Transverse colon (tissue), 4 donors: ENCODE measurements at regions of chr12 and their contacts with region 1.

Region 1: GRCh38 chr12:12983420-12984035 is 16.5 kb downstream of the HEBP1 start:
- DNase-seq: no peak
- H3K4me3 ChIP-seq: no peak overlapping the region
- H3K27ac ChIP-seq: peak overlapping the region in 1 of 4 donors; percentile 7
- H3K4me1 ChIP-seq: peaks cover 0 to 15% (median 3%) of the 10 kb centered on the region in 4 donors
- H3K27me3 ChIP-seq: no peaks in the 10 kb centered on the region
- CTCF ChIP-seq: peak; percentile 46 to 58 (median 51)
- EP300 ChIP-seq: no peak
- POLR2A ChIP-seq: no peak

Region 2: DNA sequence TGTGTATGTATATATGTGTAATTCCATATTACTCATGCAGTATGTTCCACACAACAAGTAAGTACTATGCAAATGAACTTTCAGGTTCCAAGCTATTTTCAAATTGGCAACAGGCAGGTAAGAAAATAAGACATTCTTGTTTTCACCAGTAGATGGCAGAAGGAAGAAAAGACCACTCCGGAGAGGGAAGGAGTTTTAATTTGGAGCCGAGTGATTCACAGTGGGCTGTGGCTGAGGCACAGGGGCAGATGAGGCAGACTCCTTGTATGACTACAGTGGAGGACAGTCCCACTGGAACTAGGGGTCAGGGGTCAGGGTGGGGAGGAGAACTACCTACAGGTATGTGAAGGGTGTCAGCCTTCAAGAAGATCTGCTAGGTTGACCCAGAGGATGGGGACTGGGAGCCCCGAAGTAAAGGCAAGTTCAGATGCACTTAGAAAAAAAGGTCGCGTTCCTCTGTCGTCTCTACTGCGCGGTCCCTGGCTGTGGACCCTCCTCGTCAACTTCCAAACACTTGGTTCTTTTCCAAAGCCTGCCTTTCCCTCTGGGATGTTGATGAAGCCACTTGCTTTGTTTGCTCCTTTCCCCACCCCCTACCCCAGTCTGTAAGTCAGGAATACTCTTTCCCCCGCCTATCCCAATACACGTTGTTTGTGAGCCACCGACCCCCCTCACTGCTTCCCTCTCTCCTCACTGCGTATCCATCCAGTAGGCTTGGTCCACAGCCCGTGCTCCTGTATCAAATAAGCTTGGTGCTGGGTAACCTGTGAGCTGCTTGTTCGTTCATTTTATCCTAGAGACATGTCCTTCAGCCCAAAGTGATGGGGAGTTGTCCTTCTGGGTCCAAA is 146.3 kb before region 1 on chr12:
- in situ Hi-C with region 1: loop called in 2 of 4 experiments (anchors 10 to 25 kb)
- intact Hi-C with region 1: no loop called
- DNase-seq: peak; percentile 72
- H3K4me3 ChIP-seq: no peak overlapping the region
- H3K27ac ChIP-seq: peak overlapping the region in 1 of 4 donors; percentile 39
- H3K4me1 ChIP-seq: peaks cover 4 to 39% (median 16%) of the 10 kb centered on the region in 4 donors
- H3K27me3 ChIP-seq: no peaks in the 10 kb centered on the region
- CTCF ChIP-seq: peak; percentile 52 to 78 (median 59)
- EP300 ChIP-seq: no peak
- POLR2A ChIP-seq: peak; percentile 11

Region 3: DNA sequence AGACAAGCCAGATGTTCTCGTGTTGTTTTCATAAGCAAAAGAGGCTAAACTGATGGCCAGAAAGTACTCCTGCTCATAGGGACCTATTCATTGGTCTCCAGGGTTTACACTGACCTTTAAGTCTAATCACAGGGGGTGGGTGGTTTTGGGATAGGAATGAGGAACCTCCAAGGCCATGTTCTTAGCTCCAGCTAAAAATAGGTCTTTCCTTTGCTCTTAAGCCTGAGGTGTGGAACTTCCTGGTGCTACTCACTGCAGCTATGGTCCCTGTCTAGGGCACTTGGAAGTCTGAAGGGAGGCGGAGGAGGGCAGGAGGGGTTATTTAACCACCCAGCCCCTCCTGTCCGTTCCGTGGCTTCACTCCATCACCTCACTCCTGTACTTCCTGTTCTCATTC is 73.5 kb before region 1 on chr12:
- in situ Hi-C with region 1: loop called in 3 of 4 experiments (anchors 5 to 10 kb)
- intact Hi-C with region 1: loop called (anchors 5 kb)
- DNase-seq: no peak
- H3K4me3 ChIP-seq: no peak overlapping the region
- H3K27ac ChIP-seq: peak overlapping the region; percentile 5 to 50 (median 44)
- H3K4me1 ChIP-seq: peaks cover 0 to 27% (median 11%) of the 10 kb centered on the region in 4 donors
- H3K27me3 ChIP-seq: no peaks in the 10 kb centered on the region
- CTCF ChIP-seq: no peak
- EP300 ChIP-seq: no peak
- POLR2A ChIP-seq: no peak

Region 4: DNA sequence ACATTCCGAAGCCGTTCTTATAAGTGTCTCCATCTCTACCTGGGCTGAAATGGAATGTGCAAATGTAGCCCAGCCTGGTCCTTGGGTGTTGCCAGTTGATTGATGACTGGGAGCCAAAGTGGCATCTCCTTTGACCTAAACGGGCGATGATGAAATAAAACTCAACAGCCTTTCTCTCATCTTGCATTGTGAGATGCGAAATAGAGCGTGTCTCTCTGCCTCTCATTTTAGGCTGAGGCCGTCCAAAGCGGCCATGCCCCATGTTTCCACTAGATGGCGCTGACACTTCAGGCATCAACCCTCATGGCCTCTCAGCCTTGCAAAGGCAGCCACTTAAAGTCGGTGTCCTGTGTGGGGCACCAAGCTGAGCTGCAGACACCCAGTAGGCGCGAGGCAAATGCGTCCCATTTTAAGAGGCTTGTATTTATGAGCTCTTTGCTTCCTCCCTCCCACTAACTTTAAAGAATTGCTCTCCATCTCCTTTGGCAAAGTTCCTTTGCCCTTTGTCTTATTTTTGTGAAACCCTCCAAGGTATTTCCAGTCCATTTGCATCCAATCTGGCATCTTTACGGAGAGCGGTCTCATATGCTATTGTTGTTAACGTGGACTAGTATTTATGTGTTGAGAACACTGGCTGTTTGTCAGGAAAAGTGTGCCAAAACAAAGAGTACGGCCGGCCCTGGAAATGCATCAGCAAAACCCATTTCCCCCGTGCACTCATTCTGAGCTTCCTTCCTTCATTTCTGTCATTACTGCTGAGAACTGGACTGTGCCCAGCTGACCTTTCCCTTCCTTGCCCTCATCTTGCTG is 67.2 kb before region 1 on chr12:
- in situ Hi-C with region 1: loop called in 3 of 4 experiments (anchors 5 to 10 kb)
- intact Hi-C with region 1: loop called (anchors 5 kb)
- DNase-seq: peak; percentile 87
- H3K4me3 ChIP-seq: no peak overlapping the region
- H3K27ac ChIP-seq: peak overlapping the region in 3 of 4 donors; percentile 5 to 15 (median 12)
- H3K4me1 ChIP-seq: peaks cover 0 to 6% (median 3%) of the 10 kb centered on the region in 4 donors
- H3K27me3 ChIP-seq: no peaks in the 10 kb centered on the region
- CTCF ChIP-seq: peak; percentile 95 to 98 (median 97)
- EP300 ChIP-seq: no peak
- POLR2A ChIP-seq: no peak

Region 5: DNA sequence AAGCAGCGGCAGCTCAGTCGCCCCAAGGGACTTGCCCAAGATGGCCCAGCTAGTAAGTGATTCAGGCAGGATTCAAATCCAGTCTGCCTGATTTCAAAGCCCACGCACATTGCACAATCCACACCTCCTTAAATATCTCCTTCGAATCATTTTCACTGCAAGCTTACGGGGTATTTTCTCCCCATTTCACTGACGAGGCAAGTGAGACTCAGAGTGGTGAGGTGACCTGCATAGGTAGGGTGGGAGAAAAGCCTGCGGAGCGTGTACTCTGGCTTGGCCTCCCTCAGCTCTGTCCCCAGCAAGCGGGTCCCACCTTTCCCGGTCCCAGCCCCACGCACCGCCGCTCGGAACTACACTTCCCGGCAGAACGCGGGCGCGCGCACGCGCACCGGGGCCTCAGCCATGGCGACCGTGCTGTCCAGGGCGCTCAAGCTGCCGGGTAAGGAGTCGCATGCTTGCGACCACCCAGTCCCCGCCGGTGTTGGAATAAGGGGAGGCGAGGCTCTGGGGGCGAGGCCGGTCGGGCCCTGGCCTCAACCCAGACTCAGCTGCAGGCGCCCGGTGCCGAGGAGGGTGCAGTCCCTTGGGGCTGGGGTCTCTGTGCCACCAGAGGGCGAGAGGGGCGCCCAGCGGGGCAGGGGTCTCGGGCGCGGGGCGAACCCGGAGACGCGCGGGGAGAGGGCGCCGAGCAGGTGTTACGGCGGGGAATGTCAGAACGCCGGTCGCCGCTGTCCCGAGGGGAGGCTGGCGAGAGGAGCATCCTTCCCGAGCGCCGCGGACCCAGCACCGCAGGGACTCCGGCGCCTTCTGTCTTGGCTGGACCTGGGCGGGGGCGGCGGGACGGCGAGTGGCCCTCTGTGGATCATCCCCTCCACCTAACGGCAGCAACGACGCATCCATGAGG is 60.7 kb after region 1 on chr12 and contains the start of gene FAM234B:
- in situ Hi-C with region 1: no loop called
- intact Hi-C with region 1: no loop called
- DNase-seq: peak; percentile 79
- H3K4me3 ChIP-seq: peak within 1 kb of the TSS; percentile 83 to 90 (median 87)
- H3K27ac ChIP-seq: peak within 1 kb of the TSS; percentile 42 to 73 (median 62)
- H3K4me1 ChIP-seq: peaks cover 7 to 35% (median 20%) of the 10 kb centered on the region in 4 donors
- H3K27me3 ChIP-seq: peaks cover 60% of the 10 kb centered on the region
- CTCF ChIP-seq: no peak
- EP300 ChIP-seq: no peak
- POLR2A ChIP-seq: no peak
- total RNA-seq, gene FAM234B: 0.60 to 2.6 (median 1.8) TPM